HEK293 (cell line): ENCODE measurements at regions of chr2 and their contacts with region 1.

Region 1: GRCh38 chr2:74458132-74458925 is at the start of gene WBP1:
- H3K4me3 ChIP-seq: peak within 1 kb of the TSS; percentile 82
- H3K27ac ChIP-seq: peak within 1 kb of the TSS; percentile 96
- H3K4me1 ChIP-seq: peaks cover 5% of the 10 kb centered on the region
- CTCF ChIP-seq: no peak

Region 2: DNA sequence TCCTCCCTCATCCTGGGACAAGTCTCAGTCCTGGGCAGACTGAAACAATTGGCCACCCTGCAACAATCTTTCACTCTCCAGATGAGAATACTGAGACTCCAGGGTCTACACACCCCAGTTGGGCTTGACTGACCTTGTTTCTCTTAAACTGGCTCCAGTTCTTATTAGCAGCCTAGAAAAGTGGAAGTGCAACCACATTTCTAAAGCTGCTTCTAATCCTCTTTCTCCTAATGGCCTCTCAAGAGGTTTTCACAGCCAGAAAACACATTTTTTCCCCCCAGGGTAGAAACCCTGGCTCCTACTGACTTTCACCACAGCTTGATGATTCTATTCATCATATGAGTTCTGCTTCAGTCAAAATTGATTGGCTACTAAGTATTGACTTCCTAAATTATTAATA is 160.9 kb before region 1 on chr2:
- CTCF ChIA-PET with region 1: no interaction called
- POLR2A ChIA-PET with region 1: no interaction called
- H3K4me3 ChIP-seq: no peak overlapping the region
- H3K27ac ChIP-seq: no peak overlapping the region
- H3K4me1 ChIP-seq: no peaks in the 10 kb centered on the region
- CTCF ChIP-seq: no peak

Region 3: GRCh38 chr2:74391580-74392448 is 66.5 kb before region 1 on chr2:
- CTCF ChIA-PET with region 1: interaction called, 3 read pairs
- POLR2A ChIA-PET with region 1: interaction called, 20 read pairs
- H3K4me3 ChIP-seq: peak overlapping the region; percentile 92
- H3K27ac ChIP-seq: peak overlapping the region; percentile 91
- H3K4me1 ChIP-seq: peaks cover 8% of the 10 kb centered on the region; the same call in 1 of the 2 replicates
- CTCF ChIP-seq: peak; percentile 94

Region 4: GRCh38 chr2:74440378-74441169 is 17.8 kb before region 1 on chr2:
- CTCF ChIA-PET with region 1: interaction called, 6 read pairs
- POLR2A ChIA-PET with region 1: interaction called, 40 read pairs
- H3K4me3 ChIP-seq: peak overlapping the region; percentile 56
- H3K27ac ChIP-seq: peak overlapping the region; percentile 68
- H3K4me1 ChIP-seq: peaks cover 7% of the 10 kb centered on the region
- CTCF ChIP-seq: peak; percentile 92

Region 5: GRCh38 chr2:74472086-74472944 is 14.0 kb after region 1 on chr2 and contains the start of gene MRPL53:
- CTCF ChIA-PET with region 1: interaction called, 3 read pairs
- POLR2A ChIA-PET with region 1: interaction called, 44 read pairs
- H3K4me3 ChIP-seq: peak within 1 kb of the TSS; percentile 55
- H3K27ac ChIP-seq: peak within 1 kb of the TSS; percentile 87
- H3K4me1 ChIP-seq: 0 out of 2 replicates have a peak, but pooled peaks cover 2% of the 10 kb centered on the region
- CTCF ChIP-seq: no peak; the same call in 1 of the 2 replicates

Region 6: DNA sequence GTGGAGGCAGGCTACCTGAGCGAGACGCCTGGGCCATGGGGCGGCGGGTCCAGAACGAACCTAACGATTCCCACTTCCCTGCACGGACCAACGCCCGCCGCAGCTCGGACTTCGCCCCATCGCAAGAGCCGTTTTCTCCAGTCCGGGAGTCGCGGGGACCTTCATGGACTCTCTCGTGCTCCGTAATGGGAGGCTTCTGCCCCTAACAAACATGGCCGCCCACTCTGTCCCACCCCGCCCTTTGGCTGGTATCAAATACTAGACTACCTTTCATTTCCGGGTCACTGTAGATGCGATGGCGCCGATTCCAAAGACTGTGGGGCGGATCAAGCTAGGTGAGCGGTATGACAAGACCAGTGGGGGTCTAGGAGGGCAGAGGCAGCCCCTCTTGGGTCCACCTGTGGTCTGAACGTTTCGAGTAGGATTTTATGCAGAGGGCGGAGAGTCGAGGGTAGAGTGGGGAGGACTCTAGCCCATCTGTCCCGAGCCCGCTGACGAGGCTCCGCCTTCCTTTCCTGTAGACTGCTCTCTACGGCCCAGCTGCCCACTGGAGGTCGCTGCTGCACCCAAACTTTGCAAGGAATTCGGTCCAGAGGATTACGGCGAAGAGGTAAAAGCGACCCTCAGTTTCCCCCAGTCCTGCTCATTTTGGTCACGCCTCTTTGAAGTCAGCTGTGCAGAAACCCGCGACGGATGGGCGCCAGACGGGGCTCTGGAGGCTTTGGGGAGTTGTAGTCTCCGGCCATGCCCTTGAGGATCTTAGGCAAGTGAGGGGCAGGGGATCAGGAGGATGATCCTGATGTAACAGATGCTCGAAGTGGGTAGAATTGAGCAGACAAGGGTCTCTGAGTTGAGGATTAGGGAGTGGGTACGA is 24.7 kb after region 1 on chr2 and contains the starts of genes CCDC142 and TTC31:
- CTCF ChIA-PET with region 1: interaction called, 6 read pairs
- POLR2A ChIA-PET with region 1: interaction called, 37 read pairs
- H3K4me3 ChIP-seq: peak within 1 kb of the TSS; percentile 92
- H3K27ac ChIP-seq: peak within 1 kb of the TSS; percentile 74
- H3K4me1 ChIP-seq: no peaks in the 10 kb centered on the region
- CTCF ChIP-seq: peak; percentile 88

Region 7: GRCh38 chr2:74507145-74507925 is 49.0 kb after region 1 on chr2 and contains the start of gene PCGF1:
- CTCF ChIA-PET with region 1: no interaction called
- POLR2A ChIA-PET with region 1: interaction called, 11 read pairs
- H3K4me3 ChIP-seq: peak within 1 kb of the TSS; percentile 100
- H3K27ac ChIP-seq: peak within 1 kb of the TSS; percentile 96
- H3K4me1 ChIP-seq: peaks cover 4% of the 10 kb centered on the region; the same call in 1 of the 2 replicates
- CTCF ChIP-seq: peak; percentile 100